HEK293 (cell line): ENCODE measurements at regions of chr1 and their contacts with region 1.

Region 1: DNA sequence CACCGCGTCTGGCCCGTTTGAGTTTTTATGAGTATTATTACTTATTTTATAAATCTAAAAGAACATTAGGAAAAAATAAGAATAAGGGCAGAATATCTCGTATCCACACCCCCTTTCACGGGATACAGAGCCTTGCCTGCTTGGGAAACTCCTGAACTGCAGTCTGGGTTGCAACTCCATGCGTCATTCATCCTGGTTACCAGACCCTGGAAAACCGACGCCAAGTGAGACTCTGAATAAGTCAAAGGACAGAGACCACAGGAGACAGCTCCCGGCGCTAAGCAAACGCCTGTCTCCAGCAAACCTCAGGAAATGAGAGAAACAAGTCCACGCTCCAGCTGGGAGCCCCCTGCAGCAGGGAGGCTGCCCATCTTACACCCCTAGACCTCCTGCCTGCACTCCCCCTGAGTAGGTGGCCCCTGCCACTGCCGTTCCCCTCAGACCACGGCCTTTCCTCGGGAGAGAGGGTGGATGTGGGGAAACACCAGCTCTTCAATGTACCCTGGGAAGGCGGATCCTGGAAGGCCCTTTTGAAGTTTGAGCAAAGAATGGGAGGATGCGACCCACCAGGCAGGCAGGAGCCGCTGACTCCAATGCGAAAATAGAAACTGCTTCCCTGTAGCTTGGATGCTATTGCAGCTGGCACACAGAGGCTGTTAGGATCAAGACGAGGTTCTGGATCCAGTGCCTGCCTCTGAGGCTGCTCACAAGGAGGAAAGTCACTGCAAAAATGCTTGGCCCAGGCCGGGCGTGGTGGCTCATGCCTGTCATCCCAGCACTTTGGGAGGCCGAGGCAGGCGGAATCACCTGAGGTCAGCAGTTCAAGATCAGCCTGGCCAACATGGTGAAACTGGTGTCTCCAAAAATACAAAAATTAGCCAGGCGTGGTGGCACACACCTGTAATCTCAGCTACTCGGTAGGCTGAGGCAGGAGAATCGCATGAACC is 37.7 kb upstream of the GPR157 start:
- H3K4me3 ChIP-seq: no peak overlapping the region
- H3K27ac ChIP-seq: no peak overlapping the region
- H3K4me1 ChIP-seq: peaks cover 17% of the 10 kb centered on the region
- CTCF ChIP-seq: no peak

Region 2: DNA sequence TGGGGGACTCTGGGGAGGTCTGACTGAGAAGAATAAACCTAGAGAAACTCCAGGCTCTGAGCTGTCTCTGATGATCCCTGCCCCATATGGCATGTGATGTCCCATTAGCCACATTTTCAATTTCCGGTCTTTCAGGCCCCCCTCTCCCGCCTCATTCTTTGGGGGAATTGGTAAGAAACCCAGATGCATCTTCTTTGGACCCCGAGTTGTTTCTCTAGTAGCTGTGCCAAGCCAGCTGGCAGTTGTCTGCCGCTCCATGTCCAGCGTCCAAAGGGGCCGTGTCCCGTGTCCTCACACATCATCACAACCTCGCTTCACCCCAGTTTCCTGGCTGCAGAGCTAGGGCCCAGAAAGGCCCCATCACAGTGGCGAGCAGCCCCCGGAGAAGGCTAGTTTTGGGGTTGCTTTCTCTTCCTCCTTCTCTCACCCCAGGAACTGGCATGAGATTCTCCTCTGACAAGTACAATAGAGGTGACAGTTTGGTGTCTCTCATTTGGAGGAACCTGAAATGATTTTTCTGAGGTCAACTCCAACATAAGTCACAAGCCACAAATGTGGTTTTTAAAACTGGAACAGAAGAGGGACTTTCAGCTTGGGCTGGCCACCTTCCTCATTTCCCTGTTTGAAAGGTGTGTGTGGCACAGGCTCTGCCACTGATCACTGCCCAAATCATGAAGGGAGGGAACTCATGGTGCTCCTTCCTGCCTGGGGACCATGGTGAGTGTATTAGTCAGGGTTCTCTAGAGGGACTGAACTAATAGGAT is 31.3 kb before region 1 on chr1:
- CTCF ChIA-PET with region 1: no interaction called
- POLR2A ChIA-PET with region 1: no interaction called
- H3K4me3 ChIP-seq: no peak overlapping the region
- H3K27ac ChIP-seq: no peak overlapping the region
- H3K4me1 ChIP-seq: no peaks in the 10 kb centered on the region
- CTCF ChIP-seq: no peak

Region 3: DNA sequence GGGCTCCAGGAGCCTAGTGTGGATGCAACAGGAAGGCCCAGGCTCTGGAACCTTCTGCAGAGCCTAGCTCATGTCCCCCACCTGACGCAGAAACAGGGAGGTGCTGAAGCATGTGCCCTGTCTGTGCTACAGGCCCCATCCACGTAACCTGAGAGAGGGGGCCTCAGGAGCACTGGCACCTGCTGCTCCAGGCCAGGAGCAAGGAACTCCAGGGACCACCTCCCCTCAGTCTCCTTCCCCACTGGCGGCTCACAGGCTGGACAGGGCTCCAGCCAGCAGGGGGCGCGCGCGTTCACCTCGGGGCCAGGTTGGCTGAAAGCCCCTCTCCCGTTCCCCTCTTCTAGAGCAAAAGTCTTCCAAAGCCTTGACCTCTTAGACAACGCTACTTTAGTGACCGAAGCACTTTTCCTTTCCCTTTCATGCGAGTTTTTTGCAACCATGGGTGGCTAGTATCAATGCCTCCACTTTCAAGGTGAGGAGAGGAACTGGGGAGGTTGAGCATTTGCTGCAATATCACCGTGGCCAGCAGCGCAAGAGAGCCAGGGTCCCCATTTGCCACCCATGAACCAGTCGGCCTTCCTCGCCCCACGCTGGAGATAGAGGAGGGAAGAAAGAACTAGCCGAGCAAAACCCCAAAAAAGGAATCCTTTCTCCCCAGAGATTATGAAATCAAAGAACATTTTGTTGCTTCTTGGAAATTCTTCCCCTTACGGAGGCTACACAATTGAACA is 14.8 kb after region 1 on chr1:
- CTCF ChIA-PET with region 1: interaction called, 14 read pairs
- POLR2A ChIA-PET with region 1: no interaction called
- H3K4me3 ChIP-seq: peak overlapping the region; percentile 86
- H3K27ac ChIP-seq: peak overlapping the region; percentile 97
- H3K4me1 ChIP-seq: peaks cover 7% of the 10 kb centered on the region; the same call in 1 of the 2 replicates
- CTCF ChIP-seq: peak; percentile 96

Region 4: DNA sequence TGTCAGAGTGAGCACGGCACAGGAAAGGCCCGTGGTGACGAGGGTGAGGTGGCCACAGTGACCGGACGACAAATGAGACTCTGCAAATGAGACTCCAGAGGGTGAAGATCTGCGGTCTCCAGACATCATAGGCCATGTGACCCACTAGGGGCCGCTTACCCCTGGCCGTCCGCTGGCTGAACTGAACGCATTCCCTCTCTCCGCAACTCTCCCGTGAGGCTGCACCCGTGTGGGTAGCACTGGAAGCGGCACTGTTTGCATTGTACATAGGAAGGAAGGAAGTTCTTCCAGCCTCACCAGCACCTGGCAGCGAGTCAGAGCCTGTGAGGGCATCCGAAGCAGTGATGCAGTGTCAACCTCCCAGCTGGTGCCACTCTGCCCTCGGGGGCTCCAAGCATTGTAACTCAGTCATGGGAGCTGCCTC is 102.5 kb after region 1 on chr1:
- CTCF ChIA-PET with region 1: no interaction called
- POLR2A ChIA-PET with region 1: no interaction called
- H3K4me3 ChIP-seq: no peak overlapping the region
- H3K27ac ChIP-seq: no peak overlapping the region
- H3K4me1 ChIP-seq: peaks cover 3% of the 10 kb centered on the region; the same call in 1 of the 2 replicates
- CTCF ChIP-seq: no peak

Region 5: GRCh38 chr1:9362488-9362887 is 195.9 kb after region 1 on chr1:
- CTCF ChIA-PET with region 1: no interaction called
- POLR2A ChIA-PET with region 1: no interaction called
- H3K4me3 ChIP-seq: no peak overlapping the region
- H3K27ac ChIP-seq: no peak overlapping the region
- H3K4me1 ChIP-seq: no peaks in the 10 kb centered on the region
- CTCF ChIP-seq: no peak